CD14-positive monocyte (primary cell): ENCODE measurements at regions of chr15 and their contacts with region 1.

Region 1: GRCh38 chr15:52227456-52227855 is 36.3 kb upstream of the GNB5 start:
- DNase-seq: peak; percentile 67 to 80 (median 75)
- H3K4me3 ChIP-seq: no peak overlapping the region
- H3K4me3 Mint-ChIP-seq: no peak overlapping the region
- H3K27ac ChIP-seq: no peak overlapping the region
- H3K27ac Mint-ChIP-seq: peak overlapping the region in 1 of 7 donors; percentile 65
- H3K4me1 ChIP-seq: peaks cover 9 to 14% of the 10 kb centered on the region in 2 donors
- H3K4me1 Mint-ChIP-seq: peaks cover 13% of the 10 kb centered on the region
- H3K27me3 ChIP-seq: no peaks in the 10 kb centered on the region
- H3K27me3 Mint-ChIP-seq: peaks cover 0 to 2% (median 0%) of the 10 kb centered on the region in 3 donors
- CTCF ChIP-seq: peak; percentile 84

Region 2: DNA sequence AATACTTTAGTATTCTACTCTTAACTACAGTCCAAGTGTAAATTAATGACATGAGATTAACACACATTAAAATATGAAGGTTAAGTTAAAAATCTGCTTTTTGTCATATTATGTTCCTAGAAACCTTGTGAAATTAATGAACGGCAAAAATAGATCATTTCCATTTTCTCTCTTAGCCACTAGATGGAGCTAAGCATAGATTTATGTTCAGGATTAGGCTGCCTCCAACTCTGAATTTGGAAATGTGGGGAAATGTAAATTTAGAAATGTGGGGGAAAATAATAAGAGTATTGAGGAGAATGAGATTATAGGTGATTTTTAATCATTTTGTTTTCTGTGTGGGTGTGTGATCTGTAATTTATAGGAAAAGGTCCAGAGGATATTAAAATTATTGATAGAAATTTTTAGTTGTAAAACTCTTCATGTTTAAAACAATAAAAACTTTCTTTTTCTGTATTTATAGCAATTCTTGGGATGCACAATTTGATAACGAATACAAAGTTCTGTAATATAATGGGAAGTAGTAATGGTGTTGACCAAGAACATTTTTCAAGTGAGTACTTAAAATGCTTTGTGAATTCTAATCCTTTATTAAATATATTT is 338.8 kb before region 1 on chr15:
- intact Hi-C with region 1: loop called in 1 of 2 experiments (anchors 5 kb)
- DNase-seq: peak in 2 of 3 donors; percentile 0 to 24
- H3K4me3 ChIP-seq: no peak overlapping the region
- H3K4me3 Mint-ChIP-seq: no peak overlapping the region
- H3K27ac ChIP-seq: no peak overlapping the region
- H3K27ac Mint-ChIP-seq: peak overlapping the region in 1 of 7 donors; percentile 33
- H3K4me1 ChIP-seq: no peaks in the 10 kb centered on the region
- H3K4me1 Mint-ChIP-seq: no peaks in the 10 kb centered on the region
- H3K27me3 ChIP-seq: no peaks in the 10 kb centered on the region
- H3K27me3 Mint-ChIP-seq: no peaks in the 10 kb centered on the region
- CTCF ChIP-seq: peak; percentile 87